ENCODE measurements at regions of chr12 and their contacts with region 1.

Region 1: DNA sequence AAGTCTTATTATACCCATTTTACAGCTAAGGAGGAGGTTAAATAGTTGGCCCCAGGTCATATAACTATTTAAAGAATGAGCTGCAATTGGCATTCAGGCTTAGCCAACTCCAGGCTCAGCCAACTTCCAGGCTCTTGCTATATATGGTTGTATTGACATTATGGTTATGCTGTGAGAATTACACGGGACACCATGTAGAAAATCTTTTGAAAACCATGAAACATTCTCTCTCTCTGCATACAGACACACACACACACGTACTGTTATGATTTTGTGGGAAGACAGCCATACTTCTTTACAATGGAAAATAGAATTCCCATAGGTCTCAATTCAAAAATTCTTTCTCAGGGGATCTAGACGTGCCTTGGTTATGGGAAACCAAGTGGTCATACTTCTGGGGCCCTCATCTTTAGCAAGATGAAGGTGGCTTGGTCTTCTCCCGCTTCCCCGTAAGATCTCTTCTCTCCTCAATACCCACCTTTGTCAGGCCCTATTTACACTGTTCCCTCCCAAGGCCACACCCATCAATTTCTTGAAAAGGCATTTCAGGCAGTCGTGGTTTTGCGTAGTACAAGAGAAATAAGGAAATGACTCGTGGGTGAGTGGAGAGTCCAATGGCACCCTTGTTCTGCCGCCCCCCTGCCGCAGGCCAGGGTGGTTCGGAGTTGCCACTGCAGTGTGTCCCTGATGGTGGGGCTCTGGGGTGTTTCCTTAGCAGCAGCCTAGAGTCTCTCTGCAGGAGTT is 10.0 kb upstream of the GPRC5A start:
- DNase-seq: no peak
- H3K4me3 ChIP-seq: no peak overlapping the region
- H3K27ac ChIP-seq: no peak overlapping the region
- H3K4me1 ChIP-seq: peaks cover 0 to 16% (median 5%) of the 10 kb centered on the region in 4 donors
- H3K27me3 ChIP-seq: no peaks in the 10 kb centered on the region
- CTCF ChIP-seq: no peak

Region 2: DNA sequence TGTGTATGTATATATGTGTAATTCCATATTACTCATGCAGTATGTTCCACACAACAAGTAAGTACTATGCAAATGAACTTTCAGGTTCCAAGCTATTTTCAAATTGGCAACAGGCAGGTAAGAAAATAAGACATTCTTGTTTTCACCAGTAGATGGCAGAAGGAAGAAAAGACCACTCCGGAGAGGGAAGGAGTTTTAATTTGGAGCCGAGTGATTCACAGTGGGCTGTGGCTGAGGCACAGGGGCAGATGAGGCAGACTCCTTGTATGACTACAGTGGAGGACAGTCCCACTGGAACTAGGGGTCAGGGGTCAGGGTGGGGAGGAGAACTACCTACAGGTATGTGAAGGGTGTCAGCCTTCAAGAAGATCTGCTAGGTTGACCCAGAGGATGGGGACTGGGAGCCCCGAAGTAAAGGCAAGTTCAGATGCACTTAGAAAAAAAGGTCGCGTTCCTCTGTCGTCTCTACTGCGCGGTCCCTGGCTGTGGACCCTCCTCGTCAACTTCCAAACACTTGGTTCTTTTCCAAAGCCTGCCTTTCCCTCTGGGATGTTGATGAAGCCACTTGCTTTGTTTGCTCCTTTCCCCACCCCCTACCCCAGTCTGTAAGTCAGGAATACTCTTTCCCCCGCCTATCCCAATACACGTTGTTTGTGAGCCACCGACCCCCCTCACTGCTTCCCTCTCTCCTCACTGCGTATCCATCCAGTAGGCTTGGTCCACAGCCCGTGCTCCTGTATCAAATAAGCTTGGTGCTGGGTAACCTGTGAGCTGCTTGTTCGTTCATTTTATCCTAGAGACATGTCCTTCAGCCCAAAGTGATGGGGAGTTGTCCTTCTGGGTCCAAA is 44.1 kb before region 1 on chr12:
- intact Hi-C with region 1: loop called (anchors 10 kb)
- DNase-seq: peak in 1 of 2 donors; percentile 72
- H3K4me3 ChIP-seq: no peak overlapping the region
- H3K27ac ChIP-seq: no peak overlapping the region
- H3K4me1 ChIP-seq: peaks cover 0 to 10% (median 0%) of the 10 kb centered on the region in 4 donors
- H3K27me3 ChIP-seq: no peaks in the 10 kb centered on the region
- CTCF ChIP-seq: peak; percentile 54 to 71

Region 3: DNA sequence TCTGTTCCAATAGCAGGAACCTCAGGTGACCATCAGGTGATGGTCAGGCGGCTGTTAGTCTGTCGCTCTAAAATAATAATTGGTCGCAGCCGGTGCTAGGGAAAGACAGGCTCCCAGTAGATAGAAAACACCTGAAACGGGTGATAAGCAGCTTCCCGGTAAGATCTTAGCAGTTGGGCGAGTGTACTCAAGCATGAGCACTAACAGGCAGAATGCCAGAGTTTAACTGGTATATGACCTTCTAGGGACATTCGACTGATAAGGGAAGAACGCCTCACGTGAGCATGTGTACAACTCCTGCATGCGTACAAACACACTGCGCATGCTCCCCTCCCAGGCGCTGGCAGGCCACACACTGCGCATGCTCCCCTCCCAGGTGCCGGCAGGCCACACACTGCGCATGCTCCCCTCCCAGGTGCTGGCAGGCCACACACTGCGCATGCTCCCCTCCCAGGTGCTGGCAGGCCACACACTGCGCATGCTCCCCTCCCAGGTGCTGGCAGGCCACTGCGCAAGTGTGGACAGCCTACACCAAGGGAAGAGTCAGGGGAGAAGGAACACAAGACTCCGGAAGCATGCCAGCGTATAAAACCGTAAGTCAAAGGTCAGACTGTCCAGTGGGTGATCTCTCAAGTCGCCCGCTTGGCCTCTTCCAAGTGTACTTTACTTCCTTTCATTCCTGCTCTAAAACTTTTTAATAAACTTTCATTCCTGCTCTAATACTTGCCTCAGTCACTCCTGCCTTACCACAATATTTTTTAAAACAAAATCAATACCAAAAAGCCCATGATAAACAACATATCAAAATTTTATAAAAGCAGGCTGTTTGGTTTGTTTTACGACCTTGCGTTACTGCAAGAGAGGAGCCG is 46.1 kb after region 1 on chr12:
- intact Hi-C with region 1: no loop called
- DNase-seq: peak in 1 of 2 donors; percentile 90
- H3K4me3 ChIP-seq: peak overlapping the region in 1 of 2 donors; percentile 38
- H3K27ac ChIP-seq: peak overlapping the region in 1 of 2 donors; percentile 40
- H3K4me1 ChIP-seq: peaks cover 0 to 11% (median 0%) of the 10 kb centered on the region in 4 donors
- H3K27me3 ChIP-seq: no peaks in the 10 kb centered on the region
- CTCF ChIP-seq: no peak

Region 4: GRCh38 chr12:12954356-12954755 is 73.0 kb after region 1 on chr12:
- intact Hi-C with region 1: no loop called
- DNase-seq: no peak
- H3K4me3 ChIP-seq: no peak overlapping the region
- H3K27ac ChIP-seq: no peak overlapping the region
- H3K4me1 ChIP-seq: no peaks in the 10 kb centered on the region
- H3K27me3 ChIP-seq: no peaks in the 10 kb centered on the region
- CTCF ChIP-seq: no peak

Measured in tibial artery (tissue), 4 donors.